Panc1 (cell line): ENCODE measurements at regions of chr11 and their contacts with region 1.

Region 1: DNA sequence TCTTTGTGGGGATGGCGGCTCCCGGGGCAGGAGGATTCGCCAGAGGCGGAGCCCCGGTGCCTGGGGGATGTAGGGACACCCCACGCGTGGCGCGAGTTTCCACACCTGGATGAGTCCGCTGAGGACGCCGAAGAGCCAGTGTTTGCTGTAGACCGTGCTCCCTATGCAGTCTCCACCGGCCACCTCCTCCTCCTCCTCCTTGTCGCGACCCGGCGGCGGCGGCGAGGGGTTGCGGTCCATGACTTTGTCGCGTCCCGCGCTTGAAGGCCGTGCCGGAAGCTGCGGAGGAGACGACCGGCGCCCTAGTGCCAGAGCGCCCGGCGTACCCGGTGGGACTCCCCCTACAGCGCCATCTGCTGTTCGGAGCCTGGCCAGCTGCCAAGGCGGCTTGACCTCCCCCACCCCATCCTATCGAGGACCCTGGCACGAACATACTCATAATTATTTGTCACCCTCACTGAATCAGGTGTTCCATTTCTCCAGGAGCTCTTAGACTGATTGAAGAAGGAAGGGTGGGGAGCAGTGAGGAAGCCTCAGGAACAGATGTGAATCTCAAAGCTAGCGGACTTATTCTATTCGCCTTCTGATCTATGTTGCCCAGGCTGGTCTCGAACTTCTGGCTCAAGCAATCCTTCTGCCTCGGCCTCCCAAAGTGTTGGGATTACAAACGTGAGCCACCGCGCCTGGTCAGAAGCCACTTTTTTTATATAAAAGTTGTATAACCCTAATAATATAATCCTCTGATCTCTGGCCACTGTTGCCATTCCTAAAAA is at the start of gene SAAL1:
- DNase-seq: peak; percentile 41
- ATAC-seq: peak; percentile 99
- H3K4me3 ChIP-seq: peak within 1 kb of the TSS; percentile 88 to 96
- H3K27ac ChIP-seq: peak within 1 kb of the TSS; percentile 76
- H3K4me1 ChIP-seq: peaks cover 15% of the 10 kb centered on the region
- H3K27me3 ChIP-seq: no peaks in the 10 kb centered on the region; the same call in 1 of the 2 replicates
- CTCF ChIP-seq: peak; percentile 95
- total RNA-seq, gene SAAL1: 19.5 TPM

Region 2: DNA sequence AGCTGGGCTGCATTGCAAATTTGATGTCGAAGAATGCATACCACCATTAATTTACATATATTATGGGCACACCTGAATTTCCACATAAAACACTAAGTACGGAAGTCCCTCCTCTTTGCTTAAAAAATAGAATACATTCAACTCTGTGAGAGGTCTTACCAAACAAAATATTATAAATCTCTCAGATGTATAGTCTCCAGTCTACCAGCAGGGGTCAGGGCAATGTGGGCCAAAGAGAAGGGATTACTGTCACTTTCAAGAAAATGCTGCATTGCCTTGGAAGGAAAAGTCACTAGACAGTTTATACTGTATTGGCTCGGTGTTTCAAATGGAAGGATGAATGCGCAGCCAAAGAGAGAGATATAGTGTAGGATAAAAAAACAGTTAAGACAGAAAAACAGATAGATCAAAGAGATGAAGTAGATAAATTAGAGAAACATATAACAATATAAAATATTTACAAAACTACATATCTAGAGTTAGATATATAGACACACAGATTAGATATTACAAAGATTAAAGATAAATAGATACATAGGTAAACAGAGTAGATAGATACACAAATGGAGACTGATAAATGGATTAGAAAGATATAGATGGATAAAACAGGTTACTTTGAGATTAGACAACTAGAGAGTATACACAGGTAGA is 114.1 kb before region 1 on chr11:
- CTCF ChIA-PET with region 1: no interaction called
- POLR2A ChIA-PET with region 1: no interaction called
- in situ Hi-C with region 1: no loop called
- intact Hi-C with region 1: loop called (anchors 5 kb)
- DNase-seq: no peak
- ATAC-seq: peak; percentile 85
- H3K4me3 ChIP-seq: no peak overlapping the region
- H3K27ac ChIP-seq: no peak overlapping the region
- H3K4me1 ChIP-seq: no peaks in the 10 kb centered on the region
- H3K27me3 ChIP-seq: no peaks in the 10 kb centered on the region
- CTCF ChIP-seq: peak; percentile 84; the same call in 1 of the 2 replicates

Region 3: DNA sequence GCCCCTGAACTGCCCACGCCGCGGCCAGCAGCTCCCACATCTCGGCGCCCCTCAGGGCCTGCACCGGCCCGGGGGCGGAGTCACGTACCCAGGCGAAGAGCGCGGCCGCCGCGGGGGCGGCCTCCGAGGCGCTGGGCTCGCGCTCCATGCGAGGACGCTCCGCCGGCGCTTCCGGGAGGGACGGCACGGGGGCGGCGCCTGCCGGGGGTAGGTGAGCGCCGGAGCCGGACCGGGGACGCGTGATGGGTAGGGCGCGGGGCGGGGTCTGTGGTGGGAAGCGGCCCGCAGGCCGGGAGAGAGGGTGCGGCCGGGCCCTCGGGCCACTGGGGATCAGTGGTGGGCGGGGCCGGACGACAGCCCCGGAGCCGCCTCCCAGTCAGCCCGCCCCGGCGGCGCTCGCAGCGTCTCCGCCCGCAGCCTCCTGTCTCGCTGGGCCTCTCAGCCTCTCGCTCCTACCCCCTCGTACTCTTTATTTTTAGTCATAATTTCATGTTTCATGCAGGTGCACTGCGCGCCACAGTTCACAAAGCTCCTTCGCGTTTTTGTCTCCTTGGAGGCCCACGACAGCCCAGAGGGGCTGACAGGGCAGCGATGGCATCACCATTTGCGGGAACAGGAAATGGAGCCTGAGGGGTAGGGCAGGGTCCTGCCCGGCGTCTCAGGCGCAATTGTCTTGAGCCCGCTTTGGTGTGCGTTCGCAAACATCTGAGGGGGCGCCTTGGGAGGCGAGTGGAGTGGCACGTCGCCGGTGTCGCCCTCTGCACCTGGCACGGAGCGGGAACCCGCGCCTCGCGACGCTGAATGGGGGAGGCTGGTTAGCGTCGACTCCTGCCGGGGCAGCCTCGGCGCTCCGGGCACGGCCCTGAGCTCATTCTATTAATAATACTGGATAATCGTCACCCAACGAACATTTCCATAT is 92.9 kb before region 1 on chr11 and contains the start of gene SERGEF:
- CTCF ChIA-PET with region 1: no interaction called
- POLR2A ChIA-PET with region 1: no interaction called
- in situ Hi-C with region 1: no loop called
- intact Hi-C with region 1: loop called (anchors 5 kb)
- DNase-seq: peak; percentile 24
- ATAC-seq: peak; percentile 98
- H3K4me3 ChIP-seq: peak within 1 kb of the TSS; percentile 88 to 96
- H3K27ac ChIP-seq: peak within 1 kb of the TSS; percentile 77
- H3K4me1 ChIP-seq: peaks cover 9% of the 10 kb centered on the region; the same call in 1 of the 2 replicates
- H3K27me3 ChIP-seq: peaks cover 9% of the 10 kb centered on the region; the same call in 1 of the 2 replicates
- CTCF ChIP-seq: no peak
- total RNA-seq, gene SERGEF: 35.5 TPM

Region 4: DNA sequence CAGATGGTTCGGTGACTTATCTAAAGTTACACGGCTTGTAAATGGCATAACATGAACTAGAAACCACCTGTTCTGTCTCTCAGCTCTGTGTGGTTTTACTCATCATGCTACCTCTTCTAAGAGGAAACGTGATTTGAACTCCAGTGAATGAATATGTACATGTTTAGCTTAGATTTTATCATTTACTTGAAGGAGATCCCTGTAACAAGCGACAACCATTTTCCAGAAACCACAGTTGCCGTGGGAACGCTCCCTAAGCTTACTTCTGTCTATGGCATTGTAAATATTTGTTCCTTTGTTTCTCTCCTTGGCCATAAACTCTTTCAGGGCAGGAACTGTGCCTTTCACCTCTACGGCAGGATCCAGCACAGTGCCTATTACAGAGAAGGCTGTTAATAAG is 42.9 kb before region 1 on chr11:
- CTCF ChIA-PET with region 1: no interaction called
- POLR2A ChIA-PET with region 1: interaction called, 12 read pairs
- in situ Hi-C with region 1: no loop called
- intact Hi-C with region 1: no loop called
- DNase-seq: no peak
- ATAC-seq: no peak
- H3K4me3 ChIP-seq: no peak overlapping the region
- H3K27ac ChIP-seq: no peak overlapping the region
- H3K4me1 ChIP-seq: no peaks in the 10 kb centered on the region
- H3K27me3 ChIP-seq: no peaks in the 10 kb centered on the region
- CTCF ChIP-seq: no peak